ENCODE measurements at regions of chr19 and their contacts with region 1.

Region 1: DNA sequence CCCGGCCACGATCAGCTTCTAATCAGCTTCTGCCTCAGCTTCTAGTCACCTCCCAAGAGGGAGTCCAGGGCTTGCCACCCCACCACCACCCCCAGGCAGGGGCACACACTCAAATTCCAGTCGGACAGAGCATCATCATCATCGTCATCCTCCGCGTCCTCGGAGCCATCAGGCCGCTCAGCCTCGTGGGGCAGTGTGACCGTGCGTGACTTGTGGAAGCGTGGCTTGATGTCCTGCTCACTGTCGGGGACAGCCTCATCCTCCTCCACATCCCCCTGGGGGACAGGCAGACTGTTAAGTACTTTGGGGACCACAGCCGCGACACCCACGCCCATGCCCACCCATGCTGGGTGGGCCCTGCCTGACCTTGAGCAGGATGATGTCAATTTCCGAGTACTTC is 12.5 kb downstream of the TNPO2 start:
- DNase-seq: no peak
- ATAC-seq: no peak
- H3K4me3 ChIP-seq: no peak overlapping the region
- H3K27ac ChIP-seq: no peak overlapping the region
- H3K4me1 ChIP-seq: no peaks in the 10 kb centered on the region
- H3K27me3 ChIP-seq: no peaks in the 10 kb centered on the region
- CTCF ChIP-seq: no peak
- POLR2A ChIP-seq: no peak

Region 2: GRCh38 chr19:12757544-12758274 is 46.5 kb after region 1 on chr19:
- in situ Hi-C with region 1: no loop called
- intact Hi-C with region 1: loop called (anchors 5 kb)
- DNase-seq: peak in 1 of 2 donors; percentile 70
- ATAC-seq: peak; percentile 60 to 83
- H3K4me3 ChIP-seq: peak overlapping the region; percentile 24 to 53 (median 46)
- H3K27ac ChIP-seq: peak overlapping the region in 3 of 4 donors; percentile 11 to 58 (median 57)
- H3K4me1 ChIP-seq: peaks cover 8% of the 10 kb centered on the region in 2 donors
- H3K27me3 ChIP-seq: peaks cover 0 to 4% (median 0%) of the 10 kb centered on the region in 3 donors
- CTCF ChIP-seq: peak; percentile 78 to 92 (median 83)
- POLR2A ChIP-seq: no peak

Region 3: GRCh38 chr19:12782229-12783028 is 71.2 kb after region 1 on chr19:
- in situ Hi-C with region 1: no loop called
- intact Hi-C with region 1: no loop called
- DNase-seq: peak; percentile 60 to 74
- ATAC-seq: peak; percentile 16 to 34
- H3K4me3 ChIP-seq: peak overlapping the region; percentile 52 to 65 (median 56)
- H3K27ac ChIP-seq: peak overlapping the region; percentile 99 to 100 (median 100)
- H3K4me1 ChIP-seq: peaks cover 38 to 60% of the 10 kb centered on the region in 2 donors
- H3K27me3 ChIP-seq: no peaks in the 10 kb centered on the region
- CTCF ChIP-seq: no peak
- POLR2A ChIP-seq: peak; percentile 32 to 47